ENCODE measurements at regions of chr9 and their contacts with region 1.

Region 1: GRCh38 chr9:133485361-133486260 is 6.7 kb upstream of the SLC2A6 start:
- DNase-seq: no peak
- H3K4me3 ChIP-seq: peak overlapping the region; percentile 7; the same call in 1 of the 2 replicates
- H3K27ac ChIP-seq: no peak overlapping the region
- H3K4me1 ChIP-seq: peaks cover 38% of the 10 kb centered on the region
- H3K27me3 ChIP-seq: peaks cover 20% of the 10 kb centered on the region
- CTCF ChIP-seq: no peak

Region 2: GRCh38 chr9:132973713-132974112 is 511.9 kb before region 1 on chr9:
- CTCF ChIA-PET with region 1: no interaction called
- POLR2A ChIA-PET with region 1: no interaction called
- intact Hi-C with region 1: loop called (anchors 1 kb)
- DNase-seq: no peak
- H3K4me3 ChIP-seq: no peak overlapping the region
- H3K27ac ChIP-seq: no peak overlapping the region
- H3K4me1 ChIP-seq: no peaks in the 10 kb centered on the region
- H3K27me3 ChIP-seq: peaks cover 56% of the 10 kb centered on the region
- CTCF ChIP-seq: no peak

Region 3: GRCh38 chr9:133023117-133023890 is 462.3 kb before region 1 on chr9:
- CTCF ChIA-PET with region 1: interaction called, 4 read pairs
- POLR2A ChIA-PET with region 1: no interaction called
- intact Hi-C with region 1: loop called (anchors 2 kb)
- DNase-seq: peak in 1 of 2 experiments; percentile 12
- H3K4me3 ChIP-seq: no peak overlapping the region
- H3K27ac ChIP-seq: no peak overlapping the region
- H3K4me1 ChIP-seq: no peaks in the 10 kb centered on the region
- H3K27me3 ChIP-seq: peaks cover 8% of the 10 kb centered on the region
- CTCF ChIP-seq: no peak

Region 4: DNA sequence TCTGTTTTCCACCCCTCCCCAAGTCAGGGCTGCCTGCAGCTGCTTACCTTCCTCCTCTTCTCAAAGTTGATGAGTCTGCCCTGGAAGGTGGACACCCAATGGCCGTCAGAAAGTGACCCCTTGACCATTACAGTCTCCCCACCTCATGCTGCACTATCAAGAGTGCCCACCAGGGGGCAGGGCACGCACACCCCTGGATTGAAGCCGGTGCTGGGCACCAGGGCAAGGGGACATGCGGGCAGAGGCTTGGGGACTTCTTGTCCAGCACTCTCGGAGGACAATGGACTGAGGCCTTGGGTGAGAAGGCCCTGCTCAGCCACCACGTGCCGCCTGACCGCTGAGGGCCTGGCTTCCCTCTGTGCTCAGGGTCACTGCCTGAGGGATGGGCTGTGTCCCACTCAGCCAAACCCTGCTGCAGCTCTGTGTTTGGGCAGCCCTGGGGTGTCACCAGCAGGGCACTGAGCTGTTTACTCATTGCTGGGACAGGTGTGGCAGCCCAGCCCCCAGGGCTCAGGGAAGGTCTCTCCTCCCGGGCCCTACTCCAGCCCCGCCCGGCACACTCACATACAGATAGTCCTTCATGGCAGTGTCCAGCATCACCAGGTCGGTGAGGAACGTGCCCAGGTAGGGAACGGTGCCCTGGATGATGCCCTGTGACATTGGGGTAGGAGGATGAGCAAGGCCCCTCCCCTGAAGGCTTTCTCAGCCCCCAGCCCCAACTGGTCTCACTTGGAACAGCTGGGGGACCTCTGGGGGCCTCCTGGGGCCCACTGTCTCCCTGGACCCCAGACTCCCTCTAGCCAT is 382.2 kb before region 1 on chr9:
- CTCF ChIA-PET with region 1: no interaction called
- POLR2A ChIA-PET with region 1: no interaction called
- intact Hi-C with region 1: loop called (anchors 1 kb)
- DNase-seq: peak; percentile 72 to 87
- H3K4me3 ChIP-seq: no peak overlapping the region
- H3K27ac ChIP-seq: no peak overlapping the region
- H3K4me1 ChIP-seq: peaks cover 12% of the 10 kb centered on the region
- H3K27me3 ChIP-seq: no peaks in the 10 kb centered on the region
- CTCF ChIP-seq: peak; percentile 99

Region 5: DNA sequence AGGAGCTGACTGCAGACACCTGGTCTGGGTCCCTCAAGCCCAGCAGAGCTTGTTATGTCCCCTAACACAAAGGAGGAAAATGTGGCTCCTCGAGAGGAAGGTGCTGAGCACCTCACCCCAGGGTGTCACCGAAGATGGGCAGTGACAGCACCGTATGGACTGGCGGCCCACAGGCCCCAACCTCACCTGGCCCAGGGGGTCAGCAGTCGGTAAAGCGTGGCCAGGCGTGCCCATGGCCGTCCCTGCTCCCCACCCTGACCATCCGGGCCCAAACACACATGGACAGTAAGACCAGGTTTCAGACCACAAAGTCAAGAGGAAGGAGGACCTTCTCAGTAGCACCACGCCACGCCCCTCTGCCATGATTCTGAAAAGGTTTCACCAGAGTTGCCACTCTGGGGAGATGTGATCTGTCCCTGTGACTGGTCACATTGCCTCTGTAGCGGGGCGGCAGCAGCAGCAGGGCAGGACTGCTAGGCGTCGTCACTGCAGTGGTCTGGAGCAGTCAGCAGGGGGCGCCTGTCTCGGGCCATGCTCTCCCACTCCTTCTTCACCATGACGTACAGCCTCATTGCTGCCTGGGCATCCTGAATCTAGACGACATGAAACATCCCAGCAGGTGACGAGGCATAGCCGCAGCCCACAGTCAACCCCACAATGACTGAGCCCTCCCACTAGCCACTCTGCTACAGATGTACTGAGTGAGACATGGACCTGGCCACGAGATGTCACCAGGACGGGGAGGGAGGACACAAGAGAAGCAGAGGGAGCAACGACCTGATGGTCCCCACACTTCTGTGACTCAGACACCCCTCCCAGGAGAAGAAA is 78.9 kb before region 1 on chr9:
- CTCF ChIA-PET with region 1: interaction called, 5 read pairs
- POLR2A ChIA-PET with region 1: no interaction called
- intact Hi-C with region 1: loop called (anchors 1 kb)
- DNase-seq: peak; percentile 37 to 74
- H3K4me3 ChIP-seq: no peak overlapping the region
- H3K27ac ChIP-seq: no peak overlapping the region
- H3K4me1 ChIP-seq: no peaks in the 10 kb centered on the region
- H3K27me3 ChIP-seq: no peaks in the 10 kb centered on the region
- CTCF ChIP-seq: peak; percentile 89

Region 6: DNA sequence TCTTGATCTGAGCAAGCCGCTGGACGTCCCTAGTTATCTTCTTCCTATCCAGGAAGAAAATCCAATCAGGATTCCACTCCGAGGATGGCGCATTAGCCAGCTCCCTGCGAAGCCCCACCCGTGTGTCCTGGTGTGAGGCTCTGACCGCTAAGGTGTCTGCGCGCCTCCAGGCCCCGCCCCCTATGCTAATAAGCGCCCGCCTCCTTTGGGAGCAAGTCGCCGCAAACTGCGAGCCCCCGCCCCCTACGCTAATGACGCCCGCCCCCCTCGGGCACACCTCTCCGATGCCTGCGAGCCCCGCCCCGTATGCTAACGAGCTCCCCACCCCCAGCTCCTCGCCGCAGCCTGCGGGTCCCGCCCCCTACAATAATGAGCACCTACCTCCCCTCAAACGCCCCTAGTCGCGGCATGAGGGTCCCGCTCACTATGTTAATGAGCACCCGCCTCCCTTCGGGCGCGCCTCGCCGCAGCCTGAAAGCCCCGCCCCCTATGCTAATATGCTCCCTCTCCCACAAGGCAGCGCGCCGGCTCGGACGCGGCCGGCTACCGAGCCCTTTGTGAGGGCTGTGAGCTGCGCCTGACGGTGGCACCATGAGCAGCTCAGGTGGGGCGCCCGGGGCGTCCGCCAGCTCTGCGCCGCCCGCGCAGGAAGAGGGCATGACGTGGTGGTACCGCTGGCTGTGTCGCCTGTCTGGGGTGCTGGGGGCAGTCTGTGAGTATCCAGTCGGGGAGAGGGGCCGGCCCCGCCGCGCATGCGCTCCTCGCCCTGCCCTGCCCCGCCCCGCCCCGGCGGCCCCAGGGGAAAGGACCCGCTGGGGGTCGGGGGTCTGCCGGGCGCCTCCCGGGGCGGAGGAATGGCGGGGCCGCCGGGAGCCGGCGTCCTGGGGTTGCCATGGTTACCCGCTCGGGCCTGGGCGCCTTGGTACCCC is 25.9 kb before region 1 on chr9 and contains the start of gene CACFD1:
- CTCF ChIA-PET with region 1: interaction called, 6 read pairs
- POLR2A ChIA-PET with region 1: interaction called, 11 read pairs
- intact Hi-C with region 1: no loop called
- DNase-seq: peak; percentile 87 to 98
- H3K4me3 ChIP-seq: peak within 1 kb of the TSS; percentile 61
- H3K27ac ChIP-seq: peak within 1 kb of the TSS; percentile 67
- H3K4me1 ChIP-seq: peaks cover 13% of the 10 kb centered on the region
- H3K27me3 ChIP-seq: no peaks in the 10 kb centered on the region
- CTCF ChIP-seq: no peak
- total RNA-seq, gene CACFD1: 28.7 and 32.7 TPM in 2 replicates